ENCODE measurements at regions of chr10 and their contacts with region 1.

Region 1: DNA sequence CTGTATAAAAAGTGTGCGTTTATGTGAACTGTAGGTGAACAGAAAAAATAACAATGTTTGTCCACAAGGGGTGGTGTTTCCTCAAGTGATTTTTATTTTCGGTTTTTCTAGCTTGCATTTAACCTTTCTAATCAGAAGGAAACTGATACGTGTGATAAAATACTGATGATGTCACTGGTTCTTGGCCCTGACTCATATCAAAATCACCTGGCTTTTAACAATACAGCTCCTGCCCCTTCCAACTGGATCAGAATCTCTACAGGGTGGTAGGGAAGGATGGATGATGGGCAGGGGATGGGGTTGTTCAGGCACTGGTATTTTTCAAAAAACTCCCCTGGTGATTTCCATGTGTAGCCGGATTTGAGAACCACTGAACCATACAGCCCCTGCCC is 10.9 kb downstream of the NPFFR1 start:
- ATAC-seq: peak in 3 of 8 experiments; percentile 50 to 81 (median 57)
- H3K4me3 ChIP-seq: no peak overlapping the region
- H3K27ac ChIP-seq: no peak overlapping the region
- H3K4me1 ChIP-seq: no peaks in the 10 kb centered on the region

Region 2: DNA sequence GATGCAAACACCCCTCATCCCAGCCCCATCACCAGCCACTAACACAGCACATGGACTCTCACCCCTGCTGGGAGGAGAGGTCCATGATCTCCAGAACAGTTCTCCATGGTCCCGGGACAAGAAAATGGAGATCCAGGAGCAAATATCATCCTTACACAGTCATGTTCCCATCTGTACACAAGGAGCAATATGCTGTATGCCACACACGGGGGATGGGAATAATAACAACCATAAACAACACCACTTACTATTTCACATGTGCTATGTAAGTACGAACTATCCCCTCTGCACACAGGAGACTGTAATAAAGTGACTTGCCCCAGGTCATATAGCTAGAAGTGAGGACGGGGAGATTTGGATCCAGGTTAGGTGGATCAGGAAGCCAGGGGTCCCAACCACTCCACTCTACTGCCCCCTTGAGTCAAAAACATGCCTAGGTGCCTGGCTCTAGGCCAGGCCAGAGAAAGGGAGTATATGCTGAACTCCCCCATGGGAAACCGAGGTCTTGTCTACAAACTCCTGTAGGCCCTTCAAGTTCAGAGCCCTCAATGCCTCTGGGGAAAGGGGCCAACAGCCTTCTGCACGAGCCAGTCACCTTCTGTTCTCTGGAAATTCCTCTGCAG is 75.4 kb after region 1 on chr10:
- in situ Hi-C with region 1: loop called in 1 of 9 experiments (anchors 10 kb)
- ATAC-seq: peak in 3 of 8 experiments; percentile 47 to 81 (median 66)
- H3K4me3 ChIP-seq: no peak overlapping the region
- H3K27ac ChIP-seq: no peak overlapping the region
- H3K4me1 ChIP-seq: no peaks in the 10 kb centered on the region

Measured in motor neuron (in vitro differentiated cells).